CD14-positive monocyte (primary cell): ENCODE measurements at regions of chr16 and their contacts with region 1.

Region 1: GRCh38 chr16:84617791-84618580 is at the start of gene COTL1:
- DNase-seq: peak; percentile 95 to 98 (median 95)
- H3K4me3 ChIP-seq: peak within 1 kb of the TSS; percentile 66 to 100 (median 99)
- H3K4me3 Mint-ChIP-seq: peak within 1 kb of the TSS; percentile 98 to 99
- H3K27ac ChIP-seq: peak within 1 kb of the TSS; percentile 78 to 84
- H3K27ac Mint-ChIP-seq: peak within 1 kb of the TSS; percentile 86 to 96 (median 91)
- H3K4me1 ChIP-seq: peaks cover 39 to 61% of the 10 kb centered on the region in 2 donors
- H3K4me1 Mint-ChIP-seq: peaks cover 56% of the 10 kb centered on the region
- H3K27me3 ChIP-seq: no peaks in the 10 kb centered on the region
- H3K27me3 Mint-ChIP-seq: no peaks in the 10 kb centered on the region
- CTCF ChIP-seq: no peak
- polyA plus RNA-seq, gene COTL1: 648 to 1,843 (median 1,643) TPM

Region 2: GRCh38 chr16:84308120-84308519 is 309.9 kb before region 1 on chr16:
- intact Hi-C with region 1: no loop called
- DNase-seq: no peak
- H3K4me3 ChIP-seq: no peak overlapping the region
- H3K4me3 Mint-ChIP-seq: no peak overlapping the region
- H3K27ac ChIP-seq: no peak overlapping the region
- H3K27ac Mint-ChIP-seq: no peak overlapping the region
- H3K4me1 ChIP-seq: no peaks in the 10 kb centered on the region
- H3K4me1 Mint-ChIP-seq: no peaks in the 10 kb centered on the region
- H3K27me3 ChIP-seq: peaks cover 5 to 13% of the 10 kb centered on the region in 2 donors
- H3K27me3 Mint-ChIP-seq: peaks cover 15 to 29% (median 23%) of the 10 kb centered on the region in 3 donors
- CTCF ChIP-seq: peak; percentile 19

Region 3: DNA sequence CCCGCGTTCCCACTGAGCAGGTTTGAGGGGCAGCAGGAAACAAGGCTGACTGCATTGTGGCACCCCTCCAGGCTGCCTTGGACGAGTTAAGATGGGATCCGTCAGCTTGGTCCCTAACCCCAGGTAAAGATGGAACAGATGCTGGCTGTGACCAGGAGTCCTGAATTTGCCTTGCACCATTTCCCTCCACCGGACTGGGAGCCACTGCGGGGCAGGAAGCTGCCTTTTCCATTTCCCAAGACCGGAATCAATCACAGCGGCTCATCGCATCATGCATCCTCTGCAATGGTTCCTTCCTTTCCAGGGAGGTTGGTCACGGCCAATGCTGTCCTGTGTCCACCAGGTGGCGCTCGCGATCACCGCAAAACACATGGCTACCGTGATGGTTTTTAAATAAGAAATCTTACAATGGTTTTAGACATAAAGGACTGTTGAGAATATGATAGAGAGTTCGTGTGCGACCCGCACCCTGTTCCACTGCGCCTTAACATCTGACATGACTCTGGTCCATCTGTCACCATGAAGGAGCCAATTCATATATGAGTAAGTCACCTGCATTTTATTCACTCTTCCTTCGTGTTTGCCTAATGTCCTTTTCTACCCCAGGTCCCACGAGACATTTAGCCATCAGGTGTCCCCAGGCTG is 106.7 kb before region 1 on chr16:
- intact Hi-C with region 1: loop called (anchors 1 to 2 kb)
- DNase-seq: peak; percentile 77 to 86 (median 81)
- H3K4me3 ChIP-seq: no peak overlapping the region
- H3K4me3 Mint-ChIP-seq: no peak overlapping the region
- H3K27ac ChIP-seq: no peak overlapping the region
- H3K27ac Mint-ChIP-seq: peak overlapping the region in 2 of 7 donors; percentile 49 to 55
- H3K4me1 ChIP-seq: peaks cover 40 to 42% of the 10 kb centered on the region in 2 donors
- H3K4me1 Mint-ChIP-seq: peaks cover 31% of the 10 kb centered on the region
- H3K27me3 ChIP-seq: no peaks in the 10 kb centered on the region
- H3K27me3 Mint-ChIP-seq: peaks cover 0 to 8% (median 0%) of the 10 kb centered on the region in 3 donors
- CTCF ChIP-seq: peak; percentile 95

Region 4: DNA sequence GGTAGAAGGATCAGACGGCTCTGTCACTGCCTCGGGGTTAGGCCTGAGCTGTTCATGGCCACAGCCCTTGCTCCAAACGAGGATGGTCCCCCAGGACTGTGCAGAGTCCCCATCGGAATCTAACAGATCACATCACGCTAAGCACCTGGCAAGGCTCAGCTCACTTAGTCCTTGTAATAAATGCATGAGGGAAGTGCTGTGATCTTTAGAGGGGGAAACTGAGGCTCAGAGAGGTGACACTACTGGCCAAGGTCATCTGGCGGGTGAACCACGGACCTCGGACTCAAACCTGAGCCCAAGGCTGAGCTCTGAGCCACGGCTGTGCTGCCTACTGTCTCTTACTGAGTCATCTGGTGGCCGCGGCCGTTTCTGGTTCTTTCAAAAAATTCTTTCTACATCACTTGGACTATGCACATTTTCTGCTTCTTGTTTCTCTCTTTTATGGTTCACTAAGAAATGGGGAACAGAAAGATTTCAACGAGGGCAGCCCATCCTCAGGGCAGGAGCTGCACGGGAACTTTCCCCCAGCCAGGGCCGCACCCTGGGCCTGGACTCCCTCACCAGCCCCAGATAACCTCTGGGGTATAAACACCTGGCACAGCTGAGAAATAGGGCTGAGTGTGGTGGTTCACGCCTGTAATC is 55.7 kb before region 1 on chr16:
- intact Hi-C with region 1: loop called in 1 of 2 experiments (anchors 5 kb)
- DNase-seq: peak; percentile 71 to 90 (median 83)
- H3K4me3 ChIP-seq: peak overlapping the region in 1 of 3 experiments; percentile 23
- H3K4me3 Mint-ChIP-seq: no peak overlapping the region
- H3K27ac ChIP-seq: peak overlapping the region; percentile 77 to 80
- H3K27ac Mint-ChIP-seq: peak overlapping the region; percentile 81 to 95 (median 85)
- H3K4me1 ChIP-seq: peaks cover 47 to 51% of the 10 kb centered on the region in 2 donors
- H3K4me1 Mint-ChIP-seq: peaks cover 43% of the 10 kb centered on the region
- H3K27me3 ChIP-seq: no peaks in the 10 kb centered on the region
- H3K27me3 Mint-ChIP-seq: peaks cover 0 to 4% (median 1%) of the 10 kb centered on the region in 3 donors
- CTCF ChIP-seq: no peak

Region 5: DNA sequence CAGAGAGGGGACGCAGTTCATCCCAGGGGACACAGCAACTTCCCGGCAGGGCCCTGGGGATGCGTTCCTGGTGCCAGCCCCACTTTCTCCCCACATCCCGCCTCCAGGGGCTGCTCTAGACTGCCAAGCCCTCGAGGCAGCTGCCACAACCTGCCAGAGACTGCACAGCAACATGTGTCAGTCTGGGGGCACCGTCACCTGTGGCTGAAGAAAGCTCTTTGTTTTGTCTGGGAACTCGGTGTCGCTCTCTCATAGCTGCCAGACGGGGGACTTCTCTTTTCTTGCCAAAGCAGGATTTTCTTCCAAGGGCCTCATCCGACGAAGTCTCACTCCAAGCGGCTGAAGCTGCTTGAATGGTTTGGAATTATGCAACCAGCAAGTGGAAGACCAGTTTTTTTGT is 43.8 kb before region 1 on chr16:
- intact Hi-C with region 1: loop called in 1 of 2 experiments (anchors 5 kb)
- DNase-seq: no peak
- H3K4me3 ChIP-seq: no peak overlapping the region
- H3K4me3 Mint-ChIP-seq: no peak overlapping the region
- H3K27ac ChIP-seq: peak overlapping the region in 1 of 2 donors; percentile 45
- H3K27ac Mint-ChIP-seq: peak overlapping the region in 3 of 7 donors; percentile 30 to 70 (median 57)
- H3K4me1 ChIP-seq: peaks cover 59 to 72% of the 10 kb centered on the region in 2 donors
- H3K4me1 Mint-ChIP-seq: peaks cover 68% of the 10 kb centered on the region
- H3K27me3 ChIP-seq: no peaks in the 10 kb centered on the region
- H3K27me3 Mint-ChIP-seq: peaks cover 0 to 1% (median 0%) of the 10 kb centered on the region in 3 donors
- CTCF ChIP-seq: no peak

Region 6: GRCh38 chr16:84585886-84586285 is 32.1 kb before region 1 on chr16:
- intact Hi-C with region 1: loop called (anchors 5 kb)
- DNase-seq: peak in 2 of 3 donors; percentile 32 to 47
- H3K4me3 ChIP-seq: peak overlapping the region in 1 of 3 experiments; percentile 52
- H3K4me3 Mint-ChIP-seq: peak overlapping the region; percentile 60 to 65
- H3K27ac ChIP-seq: peak overlapping the region; percentile 65 to 69
- H3K27ac Mint-ChIP-seq: peak overlapping the region; percentile 79 to 91 (median 89)
- H3K4me1 ChIP-seq: peaks cover 38 to 39% of the 10 kb centered on the region in 2 donors
- H3K4me1 Mint-ChIP-seq: peaks cover 40% of the 10 kb centered on the region
- H3K27me3 ChIP-seq: no peaks in the 10 kb centered on the region
- H3K27me3 Mint-ChIP-seq: peaks cover 0 to under 1% (median 0%) of the 10 kb centered on the region in 3 donors
- CTCF ChIP-seq: no peak

Region 7: DNA sequence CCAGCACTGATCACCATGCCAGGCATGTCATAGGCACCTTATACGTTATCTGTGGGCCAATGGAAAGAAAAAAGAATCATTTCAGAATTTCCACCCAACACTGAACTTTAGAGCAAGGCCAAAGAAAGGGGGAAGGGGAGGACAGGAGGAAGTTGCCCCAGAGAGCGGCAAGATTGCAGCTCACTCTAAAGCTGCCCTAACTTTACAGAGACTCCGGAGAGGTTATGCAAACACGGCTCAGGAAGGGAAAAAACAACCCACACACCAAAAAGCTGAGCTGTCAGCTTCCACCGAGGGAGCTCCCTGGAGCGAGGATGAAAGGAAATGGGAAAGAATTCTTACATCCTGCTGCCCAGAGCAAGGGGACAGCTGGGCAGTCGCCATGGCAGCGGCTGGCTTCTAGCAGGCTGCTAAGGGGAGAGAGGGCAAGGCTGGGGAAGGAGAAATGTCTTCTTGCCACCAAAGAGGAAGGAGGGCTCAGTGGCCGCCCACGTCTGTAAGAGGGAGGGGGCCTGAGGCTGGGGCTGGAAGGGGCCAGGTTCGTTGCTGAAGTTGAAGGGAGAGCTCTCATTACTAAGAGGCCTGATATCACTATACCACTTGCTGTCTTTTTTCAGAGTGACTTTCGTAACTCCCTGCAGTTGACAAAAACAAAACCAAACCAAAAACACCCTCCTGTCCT is 18.3 kb before region 1 on chr16:
- intact Hi-C with region 1: loop called in 1 of 2 experiments (anchors 2 kb)
- DNase-seq: peak; percentile 87 to 94 (median 93)
- H3K4me3 ChIP-seq: peak overlapping the region; percentile 13 to 59 (median 18)
- H3K4me3 Mint-ChIP-seq: peak overlapping the region; percentile 77 to 87
- H3K27ac ChIP-seq: peak overlapping the region; percentile 99
- H3K27ac Mint-ChIP-seq: peak overlapping the region; percentile 99 to 100 (median 100)
- H3K4me1 ChIP-seq: peaks cover 95 to 98% of the 10 kb centered on the region in 2 donors
- H3K4me1 Mint-ChIP-seq: peaks cover 87% of the 10 kb centered on the region
- H3K27me3 ChIP-seq: no peaks in the 10 kb centered on the region
- H3K27me3 Mint-ChIP-seq: peaks cover 0 to 11% (median 0%) of the 10 kb centered on the region in 3 donors
- CTCF ChIP-seq: no peak

Region 8: GRCh38 chr16:84647828-84648594 is 30.0 kb after region 1 on chr16 and contains the start of gene KLHL36:
- intact Hi-C with region 1: no loop called
- DNase-seq: peak; percentile 29 to 47 (median 44)
- H3K4me3 ChIP-seq: peak within 1 kb of the TSS; percentile 59 to 85 (median 72)
- H3K4me3 Mint-ChIP-seq: peak within 1 kb of the TSS; percentile 84 to 87
- H3K27ac ChIP-seq: peak within 1 kb of the TSS in 1 of 2 donors; percentile 73
- H3K27ac Mint-ChIP-seq: peak within 1 kb of the TSS; percentile 66 to 92 (median 83)
- H3K4me1 ChIP-seq: peaks cover 26 to 31% of the 10 kb centered on the region in 2 donors
- H3K4me1 Mint-ChIP-seq: peaks cover 39% of the 10 kb centered on the region
- H3K27me3 ChIP-seq: no peaks in the 10 kb centered on the region
- H3K27me3 Mint-ChIP-seq: peaks cover 0 to 7% (median 4%) of the 10 kb centered on the region in 3 donors
- CTCF ChIP-seq: no peak
- polyA plus RNA-seq, gene KLHL36: 12.1 to 50.8 (median 14.2) TPM

Region 9: DNA sequence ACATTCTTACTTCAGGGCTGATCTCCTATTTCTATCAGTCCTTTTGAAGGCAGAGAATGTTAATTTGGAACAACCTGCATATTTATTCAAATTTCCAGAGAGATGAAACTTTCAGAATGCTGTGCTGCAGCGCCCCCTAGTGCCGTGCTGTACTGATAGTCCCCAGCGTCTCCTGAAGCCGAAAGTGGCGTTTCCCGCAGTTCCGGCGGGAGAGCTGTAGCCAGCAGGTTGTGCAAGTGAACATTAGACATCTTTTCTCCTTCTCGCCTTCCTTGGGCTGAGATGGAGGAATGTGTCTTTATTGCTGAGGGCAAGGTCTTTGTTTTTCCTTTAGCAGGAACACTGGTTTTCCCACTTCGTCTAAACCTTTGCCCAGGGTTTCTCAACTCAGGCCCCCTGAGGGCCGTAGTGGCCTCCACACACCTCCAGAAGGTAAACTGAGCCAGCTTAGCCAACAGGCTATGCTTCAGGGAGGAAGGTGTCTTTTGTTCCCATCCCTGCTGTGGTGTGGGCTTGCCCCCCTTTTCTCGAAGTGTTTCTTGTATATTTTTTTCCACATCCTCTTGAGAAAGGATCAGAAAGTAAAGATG is 108.2 kb after region 1 on chr16:
- intact Hi-C with region 1: loop called in 1 of 2 experiments (anchors 5 kb)
- DNase-seq: peak; percentile 82 to 90 (median 89)
- H3K4me3 ChIP-seq: peak overlapping the region; percentile 41 to 73 (median 44)
- H3K4me3 Mint-ChIP-seq: peak overlapping the region; percentile 74 to 85
- H3K27ac ChIP-seq: peak overlapping the region; percentile 75 to 82
- H3K27ac Mint-ChIP-seq: peak overlapping the region; percentile 83 to 93 (median 91)
- H3K4me1 ChIP-seq: peaks cover 50 to 74% of the 10 kb centered on the region in 2 donors
- H3K4me1 Mint-ChIP-seq: peaks cover 77% of the 10 kb centered on the region
- H3K27me3 ChIP-seq: no peaks in the 10 kb centered on the region
- H3K27me3 Mint-ChIP-seq: peaks cover 0 to 2% (median 0%) of the 10 kb centered on the region in 3 donors
- CTCF ChIP-seq: peak; percentile 97